AG04449 (cell line): ENCODE measurements at regions of chr1 and their contacts with region 1.

Region 1: GRCh38 chr1:157878059-157878458 is 36.5 kb upstream of the CD5L start:
- DNase-seq: no peak
- H3K4me3 ChIP-seq: no peak overlapping the region
- CTCF ChIP-seq: peak; percentile 35

Region 2: GRCh38 chr1:157948312-157949073 is 70.4 kb after region 1 on chr1:
- CTCF ChIA-PET with region 1: interaction called, 11 read pairs
- POLR2A ChIA-PET with region 1: no interaction called
- DNase-seq: no peak
- H3K4me3 ChIP-seq: no peak overlapping the region
- CTCF ChIP-seq: peak; percentile 55

Region 3: DNA sequence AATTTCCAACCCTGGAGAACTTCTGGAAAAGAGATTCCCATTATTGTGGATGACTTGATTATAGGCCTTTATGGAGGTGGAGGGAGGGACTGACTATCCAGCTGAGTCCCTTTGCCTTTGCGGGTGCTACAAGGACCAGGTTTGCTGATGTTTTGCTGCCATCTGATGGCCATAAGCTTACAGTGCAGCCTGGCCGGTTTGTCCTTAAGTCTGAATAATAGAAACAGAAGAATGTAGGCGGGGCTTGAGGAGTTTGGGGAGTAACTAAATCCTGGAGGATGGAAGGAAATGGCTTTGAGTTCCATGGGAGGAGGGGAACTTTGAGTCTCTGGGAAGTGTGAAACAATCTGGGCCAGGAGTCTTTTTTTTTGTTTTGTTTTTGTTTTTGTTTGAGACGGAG is 246.9 kb after region 1 on chr1:
- CTCF ChIA-PET with region 1: interaction called, 22 read pairs
- POLR2A ChIA-PET with region 1: no interaction called
- DNase-seq: peak; percentile 71
- H3K4me3 ChIP-seq: no peak overlapping the region
- CTCF ChIP-seq: peak; percentile 87